ENCODE measurements at regions of chr2 and their contacts with region 1.

Region 1: DNA sequence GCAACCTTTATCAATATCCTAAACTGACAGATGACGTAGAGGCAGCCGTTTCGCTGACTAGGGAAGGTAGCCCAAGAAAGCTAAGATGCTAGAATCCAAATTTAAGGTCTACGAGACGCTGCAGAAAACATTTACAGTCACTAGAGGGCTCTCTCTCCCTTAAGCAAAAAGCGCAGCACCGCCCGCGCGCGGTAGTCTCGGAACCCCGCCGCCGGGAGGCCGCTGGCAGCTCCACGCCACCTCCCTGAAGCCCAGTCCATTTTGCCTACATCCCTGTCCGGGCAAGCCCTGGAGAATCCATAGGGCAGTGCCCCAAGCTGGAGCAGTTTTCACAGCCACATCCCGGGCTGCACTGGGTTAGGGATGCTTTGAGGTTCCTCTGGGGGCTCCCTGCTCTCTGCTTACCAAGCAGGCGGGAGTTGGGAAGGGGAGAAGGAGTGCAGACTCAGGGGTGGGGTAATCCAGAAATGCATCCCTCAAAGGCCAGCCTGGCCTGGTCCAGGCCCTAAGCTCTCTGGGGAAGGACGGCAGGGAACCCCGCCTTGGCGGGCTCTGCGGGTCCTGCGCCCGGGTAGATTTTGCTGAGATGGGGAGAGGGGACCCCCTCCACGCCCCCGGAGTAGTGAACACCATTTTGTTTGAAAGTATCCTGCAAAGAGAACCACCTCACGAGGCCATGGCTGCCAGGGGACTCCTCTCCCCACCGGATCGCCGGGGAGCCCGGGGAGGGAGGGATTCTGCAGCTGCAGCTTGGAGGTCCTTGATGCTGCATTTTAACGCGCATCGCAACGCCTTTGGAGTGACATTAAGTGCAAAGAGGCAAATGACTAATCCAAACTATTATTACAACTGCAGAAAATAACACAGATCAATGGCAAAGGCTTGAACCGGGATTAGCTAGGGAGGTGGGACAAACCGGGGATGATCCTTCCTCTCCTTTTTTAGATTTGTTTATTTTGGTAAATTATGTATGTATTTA is 1.3 kb upstream of the DPYSL5 start:
- DNase-seq: peak in 4 of 5 donors; percentile 49 to 59 (median 55)
- H3K4me3 ChIP-seq: no peak overlapping the region
- H3K4me3 Mint-ChIP-seq: peak overlapping the region; percentile 70 to 92 (median 78)
- H3K27ac ChIP-seq: no peak overlapping the region
- H3K27ac Mint-ChIP-seq: peak overlapping the region in 2 of 7 donors; percentile 16 to 73
- H3K4me1 ChIP-seq: peaks cover 38% of the 10 kb centered on the region
- H3K4me1 Mint-ChIP-seq: peaks cover 2 to 27% (median 8%) of the 10 kb centered on the region in 4 donors
- H3K27me3 ChIP-seq: peaks cover 43% of the 10 kb centered on the region
- H3K27me3 Mint-ChIP-seq: peaks cover 29 to 34% of the 10 kb centered on the region in 2 donors

Region 2: GRCh38 chr2:26816893-26817292 is 29.7 kb before region 1 on chr2:
- CTCF ChIA-PET with region 1: no interaction called
- POLR2A ChIA-PET with region 1: no interaction called
- intact Hi-C with region 1: no loop called
- DNase-seq: no peak
- H3K4me3 ChIP-seq: no peak overlapping the region
- H3K4me3 Mint-ChIP-seq: no peak overlapping the region
- H3K27ac ChIP-seq: no peak overlapping the region
- H3K27ac Mint-ChIP-seq: no peak overlapping the region
- H3K4me1 ChIP-seq: no peaks in the 10 kb centered on the region
- H3K4me1 Mint-ChIP-seq: peaks cover 0 to 2% (median 0%) of the 10 kb centered on the region in 4 donors
- H3K27me3 ChIP-seq: no peaks in the 10 kb centered on the region
- H3K27me3 Mint-ChIP-seq: peaks cover 20 to 32% of the 10 kb centered on the region in 2 donors

Region 3: GRCh38 chr2:26860211-26860850 is 13.7 kb after region 1 on chr2:
- CTCF ChIA-PET with region 1: interaction called, 18 read pairs
- POLR2A ChIA-PET with region 1: no interaction called
- intact Hi-C with region 1: no loop called
- DNase-seq: no peak
- H3K4me3 ChIP-seq: no peak overlapping the region
- H3K4me3 Mint-ChIP-seq: no peak overlapping the region
- H3K27ac ChIP-seq: no peak overlapping the region
- H3K27ac Mint-ChIP-seq: no peak overlapping the region
- H3K4me1 ChIP-seq: no peaks in the 10 kb centered on the region
- H3K4me1 Mint-ChIP-seq: no peaks in the 10 kb centered on the region
- H3K27me3 ChIP-seq: no peaks in the 10 kb centered on the region
- H3K27me3 Mint-ChIP-seq: peaks cover 11 to 38% of the 10 kb centered on the region in 2 donors

Region 4: DNA sequence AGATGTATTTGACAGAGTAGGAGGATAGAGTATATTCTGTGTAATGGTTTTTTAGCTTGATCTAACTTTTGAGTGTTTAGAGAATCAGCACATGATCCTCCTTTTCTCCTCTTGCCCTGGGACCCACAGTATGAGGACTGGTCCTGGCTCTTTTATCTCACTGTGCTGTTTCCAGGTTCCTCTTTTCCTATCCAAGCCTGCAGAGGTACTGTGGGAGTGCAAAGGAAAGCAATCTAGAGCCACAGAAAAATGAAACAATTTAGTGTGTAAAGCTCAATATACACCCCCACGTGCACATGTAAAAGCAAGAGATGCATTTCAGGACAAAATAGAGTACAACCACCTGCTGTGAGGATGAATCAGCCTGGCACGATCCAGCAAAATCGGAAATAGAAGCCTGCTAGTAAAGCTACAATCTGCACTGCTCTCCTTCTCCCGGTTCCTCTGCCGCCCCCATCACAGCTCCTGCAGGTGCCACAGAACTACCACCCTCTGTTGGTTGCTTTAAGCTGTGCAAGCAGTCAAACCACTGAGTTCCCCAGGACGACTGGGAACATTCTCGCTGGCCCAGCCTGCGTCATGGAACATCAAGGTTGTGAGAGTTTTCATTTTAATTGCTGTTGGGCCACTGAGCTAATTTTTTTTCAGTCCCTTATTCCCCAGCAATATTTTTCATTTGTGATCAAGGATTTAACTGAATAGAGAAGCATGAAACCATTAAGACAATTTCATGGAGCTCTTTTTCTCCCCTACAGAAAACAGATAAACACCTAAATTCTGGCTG is 76.0 kb after region 1 on chr2:
- CTCF ChIA-PET with region 1: interaction called, 19 read pairs
- POLR2A ChIA-PET with region 1: no interaction called
- intact Hi-C with region 1: loop called (anchors 5 kb)
- DNase-seq: peak in 4 of 5 donors; percentile 12 to 25 (median 22)
- H3K4me3 ChIP-seq: no peak overlapping the region
- H3K4me3 Mint-ChIP-seq: peak overlapping the region in 2 of 8 donors; percentile 7 to 26
- H3K27ac ChIP-seq: no peak overlapping the region
- H3K27ac Mint-ChIP-seq: no peak overlapping the region
- H3K4me1 ChIP-seq: no peaks in the 10 kb centered on the region
- H3K4me1 Mint-ChIP-seq: peaks cover 2 to 10% (median 7%) of the 10 kb centered on the region in 4 donors
- H3K27me3 ChIP-seq: no peaks in the 10 kb centered on the region
- H3K27me3 Mint-ChIP-seq: peaks cover 2 to 31% of the 10 kb centered on the region in 2 donors

Region 5: GRCh38 chr2:26942543-26943295 is 96.1 kb after region 1 on chr2:
- CTCF ChIA-PET with region 1: interaction called, 64 read pairs
- POLR2A ChIA-PET with region 1: no interaction called
- intact Hi-C with region 1: no loop called
- DNase-seq: peak in 4 of 5 donors; percentile 48 to 56 (median 51)
- H3K4me3 ChIP-seq: no peak overlapping the region
- H3K4me3 Mint-ChIP-seq: no peak overlapping the region
- H3K27ac ChIP-seq: no peak overlapping the region
- H3K27ac Mint-ChIP-seq: peak overlapping the region in 1 of 7 donors; percentile 46
- H3K4me1 ChIP-seq: no peaks in the 10 kb centered on the region
- H3K4me1 Mint-ChIP-seq: peaks cover 3 to 6% (median 5%) of the 10 kb centered on the region in 4 donors
- H3K27me3 ChIP-seq: no peaks in the 10 kb centered on the region
- H3K27me3 Mint-ChIP-seq: peaks cover 3 to 24% of the 10 kb centered on the region in 2 donors

Region 6: DNA sequence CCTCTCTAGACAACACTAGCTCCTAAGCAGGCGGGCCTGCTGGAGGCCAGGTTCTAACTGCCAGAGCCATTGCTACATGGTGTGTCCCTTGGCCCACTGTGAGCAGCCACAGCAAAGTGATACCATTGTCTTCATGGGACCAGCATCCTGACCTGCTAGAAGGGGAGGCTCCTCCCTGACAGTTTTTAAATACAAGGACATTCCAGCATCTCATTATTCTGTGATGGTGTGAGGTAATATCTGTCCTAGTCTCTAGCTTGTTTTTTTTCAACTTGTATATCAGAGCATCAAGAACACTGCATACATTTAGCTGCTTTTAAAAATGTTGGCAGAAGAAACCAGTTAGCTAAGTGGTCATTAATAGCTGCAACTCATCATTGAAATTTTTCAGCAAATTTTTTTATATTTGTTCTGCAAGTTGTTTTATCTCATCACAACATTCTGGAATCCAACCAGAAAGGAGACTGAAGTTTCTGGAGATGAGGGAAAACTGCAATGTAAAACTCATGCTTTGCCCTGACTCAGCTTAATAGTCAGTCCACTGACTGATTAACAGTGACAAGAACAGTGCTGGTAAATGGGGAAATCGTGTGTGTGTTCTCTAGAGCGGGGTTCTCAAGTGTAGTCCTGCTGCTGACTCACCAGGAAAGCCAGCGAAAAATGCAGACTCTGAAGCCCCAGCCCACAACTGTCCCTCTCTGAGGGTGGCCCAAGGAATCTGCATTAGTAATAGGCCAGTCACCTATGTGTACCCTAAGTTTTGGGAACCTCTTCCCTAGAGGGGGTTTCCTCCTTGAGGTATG is 141.6 kb after region 1 on chr2:
- CTCF ChIA-PET with region 1: no interaction called
- POLR2A ChIA-PET with region 1: no interaction called
- intact Hi-C with region 1: no loop called
- DNase-seq: no peak
- H3K4me3 ChIP-seq: no peak overlapping the region
- H3K4me3 Mint-ChIP-seq: no peak overlapping the region
- H3K27ac ChIP-seq: no peak overlapping the region
- H3K27ac Mint-ChIP-seq: no peak overlapping the region
- H3K4me1 ChIP-seq: no peaks in the 10 kb centered on the region
- H3K4me1 Mint-ChIP-seq: no peaks in the 10 kb centered on the region
- H3K27me3 ChIP-seq: no peaks in the 10 kb centered on the region
- H3K27me3 Mint-ChIP-seq: no peaks in the 10 kb centered on the region

Region 7: GRCh38 chr2:27016801-27017325 is 170.2 kb after region 1 on chr2:
- CTCF ChIA-PET with region 1: interaction called, 8 read pairs
- POLR2A ChIA-PET with region 1: no interaction called
- intact Hi-C with region 1: loop called (anchors 1 kb)
- DNase-seq: peak; percentile 18 to 49 (median 27)
- H3K4me3 ChIP-seq: no peak overlapping the region
- H3K4me3 Mint-ChIP-seq: no peak overlapping the region
- H3K27ac ChIP-seq: no peak overlapping the region
- H3K27ac Mint-ChIP-seq: no peak overlapping the region
- H3K4me1 ChIP-seq: no peaks in the 10 kb centered on the region
- H3K4me1 Mint-ChIP-seq: no peaks in the 10 kb centered on the region
- H3K27me3 ChIP-seq: no peaks in the 10 kb centered on the region
- H3K27me3 Mint-ChIP-seq: peaks cover 0 to 2% of the 10 kb centered on the region in 2 donors

Region 8: DNA sequence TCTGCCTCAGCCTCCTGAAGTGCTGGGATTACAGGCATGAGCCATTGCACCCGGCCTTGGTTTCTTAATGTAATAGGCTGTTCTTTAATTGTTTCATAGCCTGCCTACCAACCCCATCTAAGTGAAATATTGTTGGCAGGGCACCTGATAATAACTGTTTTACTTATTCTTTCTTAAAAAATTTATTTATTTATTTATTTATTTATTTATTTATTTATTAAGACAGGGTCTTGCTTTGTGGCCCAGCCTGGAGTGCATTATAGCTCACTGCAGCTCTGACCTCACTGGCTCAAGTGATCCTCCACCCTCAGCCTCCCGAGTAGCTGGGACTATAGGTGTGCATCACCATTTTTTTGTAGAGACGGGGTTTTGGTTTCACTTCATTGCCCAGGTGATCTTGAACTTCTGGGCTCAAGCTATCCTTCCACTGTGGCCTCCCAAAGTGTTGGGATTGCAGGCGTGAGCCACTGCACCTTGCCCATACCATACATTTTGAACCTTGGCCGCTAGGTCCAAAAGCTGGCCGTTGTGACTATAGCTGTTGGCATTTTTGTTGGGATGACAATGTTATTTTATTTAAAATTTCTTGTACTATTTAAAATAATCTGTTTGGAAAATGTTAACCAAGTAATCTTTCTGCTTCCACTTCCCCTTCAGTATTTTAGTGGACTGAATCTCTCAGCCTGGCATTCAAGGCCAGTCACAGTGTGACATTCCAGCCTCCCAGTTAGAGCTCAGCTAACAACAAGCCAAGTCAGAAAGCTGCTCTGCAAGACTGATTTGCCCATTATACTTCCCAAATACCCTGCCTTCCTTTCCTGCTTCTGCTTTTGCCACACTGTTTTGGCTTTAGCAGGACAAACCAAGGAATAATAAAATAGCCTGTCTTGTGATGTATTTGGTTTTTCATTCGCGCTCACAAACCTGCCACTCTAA is 1096.3 kb after region 1 on chr2:
- CTCF ChIA-PET with region 1: no interaction called
- POLR2A ChIA-PET with region 1: no interaction called
- intact Hi-C with region 1: no loop called
- DNase-seq: no peak
- H3K4me3 ChIP-seq: no peak overlapping the region
- H3K4me3 Mint-ChIP-seq: no peak overlapping the region
- H3K27ac ChIP-seq: no peak overlapping the region
- H3K27ac Mint-ChIP-seq: peak overlapping the region in 1 of 7 donors; percentile 12
- H3K4me1 ChIP-seq: peaks cover 3% of the 10 kb centered on the region
- H3K4me1 Mint-ChIP-seq: peaks cover 5 to 15% (median 11%) of the 10 kb centered on the region in 4 donors
- H3K27me3 ChIP-seq: no peaks in the 10 kb centered on the region
- H3K27me3 Mint-ChIP-seq: no peaks in the 10 kb centered on the region

Measured in CD4-positive, alpha-beta memory T cell (primary cell).